H1 (cell line): ENCODE measurements at regions of chr2 and their contacts with region 1.

Region 1: DNA sequence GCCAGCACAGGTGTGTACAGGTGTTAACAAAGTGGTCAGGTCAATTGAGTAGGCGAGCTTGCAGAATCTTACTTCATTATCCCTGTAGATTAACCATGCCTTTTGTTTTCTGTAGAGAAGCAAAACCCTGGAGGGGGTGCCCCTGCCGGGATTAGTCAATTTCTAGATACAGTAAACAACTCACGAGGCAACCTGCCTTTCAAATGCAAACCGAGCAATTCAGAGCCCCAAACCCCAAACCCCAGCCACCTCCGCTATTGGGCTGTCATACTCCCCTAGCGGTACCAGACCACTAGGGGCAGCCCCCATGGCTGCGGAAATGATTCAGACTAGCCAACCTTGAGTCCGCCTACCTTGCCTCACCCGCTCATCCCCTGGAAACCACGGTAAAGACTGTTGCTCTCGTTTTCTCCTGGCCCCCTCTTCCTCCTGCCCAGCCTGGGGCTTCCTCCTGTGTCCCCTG is 61.4 kb upstream of the KIF5C start:
- DNase-seq: peak; percentile 83 to 98
- H3K4me3 ChIP-seq: peak overlapping the region in 1 of 4 experiments; percentile 21; a peak in 1 of 8 replicates
- H3K27ac ChIP-seq: peak overlapping the region; percentile 61
- H3K4me1 ChIP-seq: peaks cover 1 to 36% (median 12%) of the 10 kb centered on the region in 4 experiments
- H3K27me3 ChIP-seq: no peaks in the 10 kb centered on the region; a peak in 1 of 7 replicates
- CTCF ChIP-seq: peak; percentile 72 to 89 (median 81)
- EP300 ChIP-seq: 0 out of 3 replicates have a peak, but pooled peaks of 1 of the 2 experiments have one; percentile 75
- POLR2A ChIP-seq: peak in 1 of 2 experiments; percentile 39; a peak in 1 of 3 replicates
- RAD21 ChIP-seq: peak; percentile 63 to 65

Region 2: DNA sequence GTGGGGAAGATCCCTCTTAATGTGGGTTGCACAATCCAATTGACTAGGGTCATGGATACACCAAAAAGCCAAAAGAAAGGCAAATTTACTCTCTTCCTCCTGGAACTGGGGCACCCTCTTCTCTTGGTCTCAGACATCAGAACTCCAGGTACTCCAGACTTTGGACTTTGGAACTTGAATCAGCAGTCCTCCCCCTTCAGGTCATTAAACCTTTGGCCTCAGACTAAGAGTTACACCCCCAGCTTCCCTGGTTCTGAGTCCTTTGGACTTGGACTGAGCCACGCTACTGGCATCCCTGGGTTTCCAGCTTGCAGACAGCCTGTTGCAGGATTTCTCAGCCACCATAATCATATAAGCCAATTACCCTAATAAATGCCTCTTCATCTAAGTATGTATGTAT is 10.6 kb after region 1 on chr2:
- CTCF ChIA-PET with region 1: interaction called, 47 read pairs
- POLR2A ChIA-PET with region 1: interaction called, 8 read pairs
- DNase-seq: no peak
- H3K4me3 ChIP-seq: no peak overlapping the region
- H3K27ac ChIP-seq: no peak overlapping the region
- H3K4me1 ChIP-seq: peaks cover 0 to 3% (median 0%) of the 10 kb centered on the region in 4 experiments; a peak in 1 of 7 replicates
- H3K27me3 ChIP-seq: no peaks in the 10 kb centered on the region
- CTCF ChIP-seq: no peak
- EP300 ChIP-seq: no peak
- POLR2A ChIP-seq: no peak
- RAD21 ChIP-seq: no peak

Region 3: GRCh38 chr2:148829618-148830017 is 16.0 kb after region 1 on chr2:
- CTCF ChIA-PET with region 1: interaction called, 47 read pairs
- POLR2A ChIA-PET with region 1: interaction called, 8 read pairs
- DNase-seq: no peak
- H3K4me3 ChIP-seq: no peak overlapping the region
- H3K27ac ChIP-seq: no peak overlapping the region
- H3K4me1 ChIP-seq: peaks cover 0 to 5% (median 0%) of the 10 kb centered on the region in 4 experiments; a peak in 3 of 7 replicates
- H3K27me3 ChIP-seq: no peaks in the 10 kb centered on the region
- CTCF ChIP-seq: no peak
- EP300 ChIP-seq: no peak
- POLR2A ChIP-seq: no peak
- RAD21 ChIP-seq: no peak